ENCODE measurements at regions of chr17 and their contacts with region 1.

Region 1: GRCh38 chr17:48791128-48792032 is 25.6 kb downstream of the TTLL6 start:
- DNase-seq: peak; percentile 82 to 93 (median 87)
- H3K4me3 ChIP-seq: no peak overlapping the region
- H3K27ac ChIP-seq: no peak overlapping the region
- H3K4me1 ChIP-seq: no peaks in the 10 kb centered on the region
- H3K27me3 ChIP-seq: no peaks in the 10 kb centered on the region
- CTCF ChIP-seq: peak; percentile 77 to 85 (median 82)
- POLR2A ChIP-seq: no peak

Region 2: DNA sequence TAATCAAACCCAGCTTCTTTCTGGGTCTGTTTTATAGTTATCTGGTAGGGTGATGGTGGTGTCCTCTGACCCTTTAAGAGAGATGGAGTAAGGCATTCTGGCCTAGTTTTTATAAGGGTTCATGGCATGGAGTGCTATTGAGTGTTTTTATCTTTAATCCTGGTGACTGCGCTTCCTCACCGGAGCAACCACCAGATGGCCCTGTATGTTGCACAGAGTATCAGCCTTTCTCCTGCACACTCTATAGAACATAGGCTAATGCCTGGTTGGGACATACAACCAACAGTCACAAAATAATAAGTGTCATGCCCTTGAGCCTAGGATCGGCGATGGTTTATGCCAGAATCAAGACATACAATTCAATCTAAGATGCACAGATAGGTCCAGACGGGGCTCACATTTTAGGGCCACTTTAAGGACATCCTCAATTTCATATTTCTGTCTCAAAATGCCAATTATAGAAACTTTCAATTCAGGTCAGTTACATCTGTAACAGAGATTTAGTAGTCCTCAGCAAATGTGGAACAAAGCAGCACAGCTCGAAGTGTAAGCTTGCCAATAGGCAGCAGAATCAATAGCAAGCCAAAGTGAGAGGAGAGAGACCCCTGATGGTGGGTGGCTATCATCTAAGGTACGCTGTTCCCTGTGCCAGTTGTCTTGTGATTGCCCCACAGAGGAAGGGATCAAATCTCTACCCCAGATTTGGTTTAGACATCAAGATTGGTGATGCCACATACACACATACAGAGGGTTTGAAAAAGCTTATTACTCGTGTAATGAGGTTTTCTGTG is 128.1 kb before region 1 on chr17:
- intact Hi-C with region 1: no loop called
- DNase-seq: no peak
- H3K4me3 ChIP-seq: no peak overlapping the region
- H3K27ac ChIP-seq: no peak overlapping the region
- H3K4me1 ChIP-seq: no peaks in the 10 kb centered on the region
- H3K27me3 ChIP-seq: no peaks in the 10 kb centered on the region
- CTCF ChIP-seq: no peak
- POLR2A ChIP-seq: no peak

Region 3: GRCh38 chr17:48678141-48678971 is 113.0 kb before region 1 on chr17:
- intact Hi-C with region 1: loop called (anchors 5 kb)
- DNase-seq: peak; percentile 49 to 74 (median 69)
- H3K4me3 ChIP-seq: no peak overlapping the region
- H3K27ac ChIP-seq: no peak overlapping the region
- H3K4me1 ChIP-seq: peaks cover 0 to 5% of the 10 kb centered on the region in 2 donors
- H3K27me3 ChIP-seq: peaks cover 19% of the 10 kb centered on the region
- CTCF ChIP-seq: peak; percentile 71 to 96 (median 84)
- POLR2A ChIP-seq: no peak

Region 4: GRCh38 chr17:48724251-48725003 is 67.0 kb before region 1 on chr17:
- intact Hi-C with region 1: loop called (anchors 5 kb)
- DNase-seq: peak; percentile 82 to 94 (median 86)
- H3K4me3 ChIP-seq: peak overlapping the region in 1 of 4 donors; percentile 13
- H3K27ac ChIP-seq: no peak overlapping the region
- H3K4me1 ChIP-seq: peaks cover 0 to 6% of the 10 kb centered on the region in 2 donors
- H3K27me3 ChIP-seq: peaks cover 98% of the 10 kb centered on the region
- CTCF ChIP-seq: peak; percentile 42 to 71 (median 70)
- POLR2A ChIP-seq: no peak

Measured in adrenal gland (tissue), 19 donors.